ENCODE measurements at regions of chr2 and their contacts with region 1.

Region 1: GRCh38 chr2:74002487-74003391 is 18.0 kb downstream of the TET3 start:
- DNase-seq: peak; percentile 76 to 99 (median 88)

Region 2: GRCh38 chr2:74052732-74053597 is 50.2 kb after region 1 on chr2:
- intact Hi-C with region 1: loop called (anchors 5 kb)
- DNase-seq: no peak

Region 3: GRCh38 chr2:74092275-74092674 is 89.5 kb after region 1 on chr2:
- intact Hi-C with region 1: loop called (anchors 5 kb)
- DNase-seq: peak in 1 of 10 donors; percentile 37

Region 4: DNA sequence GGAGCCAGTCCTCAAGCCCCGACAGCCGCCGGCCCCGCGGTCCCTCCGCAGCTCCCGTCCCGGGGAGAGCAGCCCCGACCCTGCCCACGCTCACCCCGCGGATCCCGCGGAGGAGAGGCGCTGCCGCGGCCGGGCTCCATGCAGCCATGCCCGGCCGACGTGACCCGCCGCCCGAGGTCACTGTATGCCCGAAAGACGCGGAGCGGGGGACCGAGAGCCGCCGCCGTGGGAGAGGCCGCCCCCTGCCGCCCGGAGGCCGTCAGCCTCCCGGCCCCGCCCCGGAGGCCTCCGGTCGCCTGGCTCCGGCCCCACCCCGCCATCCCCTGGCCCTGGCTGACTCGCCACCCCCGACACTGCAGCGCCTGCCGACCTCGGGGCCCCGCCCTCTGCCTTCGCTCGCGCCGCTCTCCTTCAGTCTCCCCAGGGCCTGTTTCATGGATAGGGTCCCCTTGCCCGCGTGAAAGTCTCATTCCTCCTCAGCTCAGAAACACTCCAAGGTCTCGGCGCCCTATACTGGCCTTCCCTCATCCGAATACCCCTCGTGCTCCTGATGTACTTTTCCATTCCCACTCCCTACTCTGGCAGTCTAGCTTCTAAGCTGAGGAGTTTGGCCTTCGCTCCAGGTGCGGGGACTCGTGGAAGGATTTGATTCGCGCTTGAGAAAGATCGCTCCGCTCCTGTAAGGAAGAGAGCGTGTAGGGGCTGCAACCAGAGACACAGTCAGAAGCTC is 145.2 kb after region 1 on chr2 and contains the start of gene BOLA3:
- intact Hi-C with region 1: loop called (anchors 5 kb)
- DNase-seq: peak; percentile 78 to 98 (median 88)

Measured in posterior cingulate gyrus (tissue), 11 donors.